ENCODE measurements at regions of chr14 and their contacts with region 1.

Region 1: DNA sequence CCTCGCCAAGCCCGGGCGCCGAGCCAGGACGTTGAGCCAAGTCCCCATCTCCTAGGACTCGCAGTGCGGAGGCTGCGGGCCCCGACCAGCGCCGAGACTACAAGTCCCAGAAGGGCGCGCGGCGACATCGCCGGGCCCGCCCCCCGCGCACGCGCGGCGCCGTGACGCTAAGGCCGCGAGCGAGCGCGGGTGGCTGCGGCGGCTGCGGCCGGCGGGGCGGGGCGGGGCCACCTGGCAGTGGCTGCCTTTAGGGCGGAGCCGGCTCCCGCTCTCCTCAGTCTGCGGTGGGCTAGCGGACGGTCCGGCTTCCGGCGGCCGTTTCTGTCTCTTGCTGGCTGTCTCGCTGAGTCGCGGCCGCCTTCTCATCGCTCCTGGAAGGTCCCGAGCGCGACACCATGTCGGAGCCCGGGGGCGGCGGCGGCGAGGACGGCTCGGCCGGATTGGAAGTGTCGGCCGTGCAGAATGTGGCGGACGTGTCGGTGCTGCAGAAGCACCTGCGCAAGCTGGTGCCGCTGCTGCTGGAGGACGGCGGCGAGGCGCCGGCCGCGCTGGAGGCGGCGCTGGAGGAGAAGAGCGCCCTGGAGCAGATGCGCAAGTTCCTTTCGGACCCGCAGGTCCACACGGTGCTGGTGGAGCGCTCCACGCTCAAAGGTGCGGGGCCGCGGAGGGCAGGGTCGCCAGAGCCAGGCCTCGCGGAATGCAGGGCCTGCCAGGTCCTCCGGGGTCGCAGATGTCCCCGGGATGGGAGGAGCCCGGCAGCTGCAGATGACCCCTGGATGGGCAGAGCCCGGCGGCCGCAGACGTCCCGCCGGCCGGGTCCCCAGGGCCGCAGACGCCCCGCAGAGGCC is at the start of gene DYNC1H1:
- DNase-seq: peak; percentile 84
- H3K4me3 ChIP-seq: peak within 1 kb of the TSS; percentile 86 to 97 (median 97)
- H3K27ac ChIP-seq: peak within 1 kb of the TSS; percentile 80
- H3K4me1 ChIP-seq: peaks cover 32% of the 10 kb centered on the region
- H3K27me3 ChIP-seq: no peaks in the 10 kb centered on the region
- CTCF ChIP-seq: no peak
- total RNA-seq, gene DYNC1H1: 557 to 626 TPM

Region 2: DNA sequence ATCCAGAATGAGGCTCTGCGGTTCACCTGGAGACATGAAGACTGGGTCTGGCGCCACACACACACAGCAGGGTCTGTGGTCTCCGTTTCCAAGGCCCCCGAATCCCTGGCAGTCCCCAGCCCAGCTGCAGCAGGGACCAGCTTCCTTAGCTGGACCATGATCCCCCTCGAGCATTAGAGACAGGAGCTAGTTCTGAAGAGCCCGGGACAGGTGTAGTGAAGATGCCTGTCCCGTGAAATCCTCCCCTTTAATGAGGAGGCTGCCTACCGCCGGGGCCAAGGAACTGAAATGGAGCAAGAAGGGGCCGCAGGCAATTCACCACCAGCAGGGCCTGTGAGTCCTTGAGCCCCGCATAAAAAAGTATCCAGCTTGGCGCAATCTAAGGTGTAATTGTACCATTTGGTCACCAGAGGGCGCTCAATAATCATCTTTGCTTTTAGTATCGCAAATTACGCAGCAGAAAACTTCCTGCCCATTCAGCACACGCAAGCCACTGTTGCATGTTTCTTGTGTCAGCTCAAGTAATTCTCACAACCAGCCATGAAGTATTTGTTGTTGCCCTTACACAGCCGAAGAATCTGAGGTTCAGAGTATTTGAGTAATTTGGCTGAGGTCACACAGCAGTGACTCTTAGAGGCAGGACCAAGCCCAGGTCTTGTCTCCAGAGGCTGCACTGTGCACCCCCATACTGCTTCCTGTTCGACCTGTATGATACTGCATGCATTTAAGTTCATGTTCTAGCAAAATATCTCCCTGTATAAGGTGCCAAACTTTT is 257.3 kb before region 1 on chr14:
- CTCF ChIA-PET with region 1: no interaction called
- dilution Hi-C with region 1: no loop called
- in situ Hi-C with region 1: no loop called
- intact Hi-C with region 1: loop called (anchors 1 kb)
- DNase-seq: peak; percentile 58
- H3K4me3 ChIP-seq: no peak overlapping the region
- H3K27ac ChIP-seq: no peak overlapping the region
- H3K4me1 ChIP-seq: peaks cover 10% of the 10 kb centered on the region
- H3K27me3 ChIP-seq: no peaks in the 10 kb centered on the region
- CTCF ChIP-seq: peak; percentile 66 to 71

Region 3: GRCh38 chr14:101934601-101935150 is 29.8 kb before region 1 on chr14:
- CTCF ChIA-PET with region 1: interaction called, 17 read pairs
- dilution Hi-C with region 1: no loop called
- in situ Hi-C with region 1: no loop called
- intact Hi-C with region 1: no loop called
- DNase-seq: no peak
- H3K4me3 ChIP-seq: no peak overlapping the region
- H3K27ac ChIP-seq: no peak overlapping the region
- H3K4me1 ChIP-seq: no peaks in the 10 kb centered on the region
- H3K27me3 ChIP-seq: no peaks in the 10 kb centered on the region
- CTCF ChIP-seq: no peak

Region 4: DNA sequence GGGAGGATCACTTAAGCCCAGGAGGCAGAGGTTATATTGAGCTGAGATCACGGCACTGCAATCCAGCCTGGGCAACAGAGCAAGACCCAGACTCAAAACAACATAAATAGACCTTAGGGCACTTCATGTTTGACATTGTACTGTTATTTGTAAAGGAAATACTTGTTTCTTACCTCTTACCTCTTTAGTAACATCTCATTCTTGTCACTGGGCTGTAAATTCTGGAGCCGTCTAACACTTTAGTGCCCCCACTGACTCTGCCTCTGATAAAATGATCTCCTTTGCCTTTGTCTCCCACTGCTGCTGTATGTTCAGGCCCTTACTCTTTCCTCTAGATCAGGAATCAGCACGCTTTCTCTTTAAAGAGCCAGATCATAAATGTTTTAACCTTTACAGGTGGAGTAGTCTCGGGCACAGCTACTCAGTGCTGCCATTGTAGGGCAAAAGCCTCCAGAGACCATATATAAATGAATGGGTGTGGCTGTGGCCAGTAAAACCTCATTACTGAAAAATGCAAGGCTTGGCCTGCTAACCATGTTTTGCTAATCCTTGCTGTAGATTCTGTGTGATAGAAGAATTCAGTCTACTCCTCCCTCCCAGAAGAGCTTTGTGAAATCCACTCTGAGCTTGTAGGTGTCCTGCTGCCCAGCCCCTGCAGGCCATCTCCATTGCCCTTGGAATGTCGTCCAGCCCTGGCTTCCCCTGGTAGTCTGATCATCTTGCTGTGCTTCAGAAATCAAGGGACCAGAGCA is 64.1 kb after region 1 on chr14:
- CTCF ChIA-PET with region 1: interaction called, 3 read pairs
- dilution Hi-C with region 1: no loop called
- in situ Hi-C with region 1: no loop called
- intact Hi-C with region 1: loop called (anchors 1 kb)
- DNase-seq: peak; percentile 86
- H3K4me3 ChIP-seq: no peak overlapping the region
- H3K27ac ChIP-seq: peak overlapping the region; percentile 71
- H3K4me1 ChIP-seq: peaks cover 37% of the 10 kb centered on the region
- H3K27me3 ChIP-seq: no peaks in the 10 kb centered on the region
- CTCF ChIP-seq: no peak

Region 5: DNA sequence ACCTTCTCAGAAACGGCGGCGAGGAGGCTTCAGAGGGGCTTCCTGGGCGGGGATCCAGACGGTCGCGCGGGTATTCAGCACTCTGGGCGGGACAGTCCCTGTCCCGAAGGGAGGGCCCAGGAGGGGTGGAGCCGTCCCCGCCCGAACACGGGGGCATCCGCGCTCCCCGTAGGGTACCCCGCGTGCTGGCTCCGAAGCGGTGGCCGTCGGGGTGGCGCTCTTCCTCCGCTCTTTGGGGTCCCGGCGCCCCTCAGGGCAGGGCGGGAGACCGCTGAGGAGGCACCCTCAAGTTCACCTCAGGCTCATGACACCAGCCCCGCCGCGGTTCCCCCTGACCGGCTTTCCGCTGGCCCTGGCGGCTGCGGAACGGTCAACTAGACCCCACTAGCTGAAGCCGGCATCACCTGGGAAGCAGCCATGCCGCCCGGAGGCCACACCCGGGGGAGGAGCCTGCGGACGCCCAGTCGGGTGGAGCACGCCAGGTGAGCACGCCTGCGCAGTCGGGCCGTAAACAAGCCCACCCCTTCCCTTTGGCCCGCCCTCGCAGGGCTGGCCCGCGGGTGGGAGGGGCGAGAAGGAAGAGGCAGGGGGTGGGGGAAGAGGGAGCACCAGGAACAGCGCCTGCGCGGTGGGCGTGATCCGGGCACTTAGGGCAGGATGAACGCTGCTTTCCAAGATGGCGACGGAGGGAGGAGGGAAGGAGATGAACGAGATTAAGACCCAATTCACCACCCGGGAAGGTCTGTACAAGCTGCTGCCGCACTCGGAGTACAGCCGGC is 174.9 kb after region 1 on chr14 and contains the start of gene WDR20:
- CTCF ChIA-PET with region 1: no interaction called
- dilution Hi-C with region 1: no loop called
- in situ Hi-C with region 1: no loop called
- intact Hi-C with region 1: loop called (anchors 2 kb)
- DNase-seq: peak; percentile 98
- H3K4me3 ChIP-seq: peak within 1 kb of the TSS; percentile 89 to 99 (median 95)
- H3K27ac ChIP-seq: peak within 1 kb of the TSS; percentile 74
- H3K4me1 ChIP-seq: peaks cover 6% of the 10 kb centered on the region
- H3K27me3 ChIP-seq: no peaks in the 10 kb centered on the region
- CTCF ChIP-seq: peak in 1 of 2 donors; percentile 23
- total RNA-seq, gene WDR20: 25.3 to 27.3 TPM

Region 6: DNA sequence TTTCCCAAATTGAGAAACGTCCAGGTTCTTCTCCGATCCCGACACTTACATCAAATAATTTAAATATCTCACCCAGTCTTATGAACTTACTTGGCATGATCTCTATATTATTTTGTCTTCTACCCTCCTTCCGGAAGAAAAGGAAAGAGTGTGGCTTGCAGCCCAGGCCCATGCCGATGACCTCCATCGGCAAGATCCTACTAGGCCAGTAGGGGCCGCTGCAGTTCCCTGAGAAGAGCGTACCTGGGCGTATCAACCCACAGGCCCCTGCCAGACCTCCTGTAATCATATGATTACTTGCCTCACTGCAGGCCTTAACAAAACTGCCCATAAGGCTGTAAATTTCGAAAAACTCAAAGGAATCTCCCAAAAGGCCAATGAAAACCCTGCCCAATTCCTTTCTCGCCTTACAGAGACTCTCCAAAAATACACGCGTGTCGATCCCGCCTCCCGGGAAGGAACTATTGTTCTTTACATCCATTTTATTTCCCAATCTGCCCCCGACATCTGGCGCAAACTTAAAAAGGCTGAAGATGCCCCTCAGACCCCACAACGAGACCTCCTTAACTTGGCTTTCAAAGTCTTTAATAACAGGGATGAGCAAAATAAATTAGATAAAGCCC is 270.9 kb after region 1 on chr14:
- CTCF ChIA-PET with region 1: no interaction called
- dilution Hi-C with region 1: no loop called
- in situ Hi-C with region 1: no loop called
- intact Hi-C with region 1: loop called (anchors 5 kb)
- DNase-seq: peak; percentile 64
- H3K4me3 ChIP-seq: no peak overlapping the region
- H3K27ac ChIP-seq: no peak overlapping the region
- H3K4me1 ChIP-seq: peaks cover 9% of the 10 kb centered on the region
- H3K27me3 ChIP-seq: no peaks in the 10 kb centered on the region
- CTCF ChIP-seq: peak; percentile 69 to 93